Caco-2 (cell line): ENCODE measurements at regions of chr10 and their contacts with region 1.

Region 1: DNA sequence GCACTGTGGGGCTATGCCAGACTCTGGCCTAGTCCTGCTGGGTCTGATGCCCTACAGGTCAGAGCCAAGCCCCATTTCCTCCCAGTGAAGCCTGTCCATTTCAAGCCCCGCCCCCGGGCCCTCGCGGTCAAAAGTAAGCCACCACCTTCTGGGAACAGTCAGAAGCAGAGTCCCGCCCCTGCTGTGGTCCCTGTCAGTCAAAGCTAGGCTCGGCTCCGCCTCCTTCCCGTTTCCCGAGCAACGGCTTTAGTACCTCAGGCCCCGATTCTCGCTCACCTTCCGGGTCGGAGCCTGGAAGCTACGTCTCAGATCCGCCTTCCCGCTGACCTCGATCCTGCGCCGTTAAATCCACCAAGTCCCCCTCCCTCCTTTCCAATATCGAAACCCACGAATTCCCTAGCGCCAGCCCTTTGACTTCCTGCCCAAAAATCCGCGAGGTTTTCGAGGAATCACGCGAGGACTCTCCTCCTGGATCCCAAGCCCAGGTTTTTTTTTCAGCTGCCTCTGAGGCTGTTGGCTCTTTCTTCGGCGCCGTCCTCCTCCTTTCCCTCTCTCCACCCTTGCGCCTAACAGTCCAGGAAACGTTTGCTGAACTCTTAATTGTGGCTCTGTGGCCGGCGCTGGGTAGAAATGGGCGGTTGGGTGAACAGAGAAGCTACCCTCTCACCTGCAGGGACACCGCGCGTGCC is 11.8 kb downstream of the SFXN3 start:
- DNase-seq: peak; percentile 98
- H3K4me3 ChIP-seq: peak overlapping the region; percentile 40
- H3K4me3 Mint-ChIP-seq: peak overlapping the region; percentile 92
- H3K27ac Mint-ChIP-seq: peak overlapping the region; percentile 99
- H3K4me1 ChIP-seq: peaks cover 24% of the 10 kb centered on the region
- H3K4me1 Mint-ChIP-seq: peaks cover 14% of the 10 kb centered on the region
- H3K27me3 ChIP-seq: no peaks in the 10 kb centered on the region
- H3K27me3 Mint-ChIP-seq: no peaks in the 10 kb centered on the region
- CTCF ChIP-seq: no peak

Region 2: GRCh38 chr10:100998991-100999741 is 43.6 kb before region 1 on chr10:
- CTCF ChIA-PET with region 1: interaction called, 10 read pairs
- POLR2A ChIA-PET with region 1: no interaction called
- intact Hi-C with region 1: no loop called
- DNase-seq: peak; percentile 79 to 89
- H3K4me3 ChIP-seq: peak overlapping the region; percentile 94
- H3K4me3 Mint-ChIP-seq: peak overlapping the region; percentile 81
- H3K27ac Mint-ChIP-seq: peak overlapping the region; percentile 74
- H3K4me1 ChIP-seq: peaks cover 18% of the 10 kb centered on the region
- H3K4me1 Mint-ChIP-seq: peaks cover 14% of the 10 kb centered on the region
- H3K27me3 ChIP-seq: no peaks in the 10 kb centered on the region
- H3K27me3 Mint-ChIP-seq: no peaks in the 10 kb centered on the region
- CTCF ChIP-seq: peak; percentile 81 to 97

Region 3: GRCh38 chr10:101031128-101031795 is 11.5 kb before region 1 on chr10 and contains the starts of genes PDZD7 and SFXN3:
- CTCF ChIA-PET with region 1: interaction called, 43 read pairs
- POLR2A ChIA-PET with region 1: interaction called, 15 read pairs
- intact Hi-C with region 1: loop called (anchors 1 kb)
- DNase-seq: peak; percentile 97 to 99
- H3K4me3 ChIP-seq: peak within 1 kb of the TSS; percentile 76
- H3K4me3 Mint-ChIP-seq: peak within 1 kb of the TSS; percentile 80
- H3K27ac Mint-ChIP-seq: peak within 1 kb of the TSS; percentile 93
- H3K4me1 ChIP-seq: peaks cover 33% of the 10 kb centered on the region
- H3K4me1 Mint-ChIP-seq: peaks cover 17% of the 10 kb centered on the region
- H3K27me3 ChIP-seq: no peaks in the 10 kb centered on the region
- H3K27me3 Mint-ChIP-seq: no peaks in the 10 kb centered on the region
- CTCF ChIP-seq: no peak
- total RNA-seq, gene PDZD7: 1.4 and 1.5 TPM in 2 replicates
- total RNA-seq, gene SFXN3: 23.4 and 30.3 TPM in 2 replicates

Region 4: GRCh38 chr10:101067356-101068083 is 24.7 kb after region 1 on chr10:
- CTCF ChIA-PET with region 1: interaction called, 47 read pairs
- POLR2A ChIA-PET with region 1: interaction called, 24 read pairs
- intact Hi-C with region 1: loop called (anchors 1 kb)
- DNase-seq: peak; percentile 90
- H3K4me3 ChIP-seq: peak overlapping the region; percentile 70
- H3K4me3 Mint-ChIP-seq: peak overlapping the region; percentile 96
- H3K27ac Mint-ChIP-seq: peak overlapping the region; percentile 98
- H3K4me1 ChIP-seq: peaks cover 30% of the 10 kb centered on the region
- H3K4me1 Mint-ChIP-seq: peaks cover 22% of the 10 kb centered on the region
- H3K27me3 ChIP-seq: no peaks in the 10 kb centered on the region
- H3K27me3 Mint-ChIP-seq: no peaks in the 10 kb centered on the region
- CTCF ChIP-seq: peak; percentile 86 to 92

Region 5: DNA sequence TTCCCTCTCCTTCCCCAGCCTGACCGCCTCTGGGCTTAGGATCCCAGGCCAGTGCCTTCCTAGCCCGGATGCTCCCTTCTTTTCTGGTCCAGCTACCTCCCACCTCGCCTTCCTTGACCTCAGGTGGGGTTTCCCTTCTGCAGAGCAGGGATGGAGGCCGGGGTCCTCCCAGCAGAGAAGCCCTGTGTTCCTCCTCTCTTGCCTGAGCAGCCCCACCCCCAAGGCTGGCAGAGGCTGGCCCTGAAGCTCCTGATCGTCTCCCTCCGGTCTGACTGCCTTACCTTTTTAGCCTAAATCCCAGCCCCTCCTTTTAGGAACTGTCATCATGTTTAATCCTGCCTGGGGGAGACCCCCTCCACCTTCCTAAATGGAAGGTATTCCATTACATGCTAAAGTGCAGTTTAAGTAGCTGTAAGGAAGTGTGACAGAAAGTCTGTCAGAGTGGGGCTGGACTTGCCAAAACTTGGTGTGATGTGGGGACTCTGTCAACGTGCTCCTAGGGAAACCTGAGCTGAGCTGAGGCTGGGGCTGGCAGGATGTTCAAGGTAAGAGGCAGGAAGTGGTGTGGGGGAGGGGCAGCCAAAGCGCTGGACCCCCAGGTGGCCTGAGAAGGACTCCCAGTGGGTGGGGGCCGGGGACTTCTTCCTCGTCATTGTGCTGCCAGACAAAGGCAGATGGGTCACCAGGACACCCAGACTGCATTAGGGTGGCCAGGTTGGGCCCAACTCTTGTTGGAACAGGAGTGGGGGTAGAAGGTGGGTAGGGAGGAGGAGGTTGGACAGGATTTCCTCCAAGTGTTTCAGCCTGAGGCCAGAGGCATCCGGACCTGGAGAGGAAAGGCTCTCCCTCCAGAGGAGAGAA is 147.0 kb after region 1 on chr10:
- CTCF ChIA-PET with region 1: interaction called, 12 read pairs
- POLR2A ChIA-PET with region 1: no interaction called
- intact Hi-C with region 1: no loop called
- DNase-seq: no peak
- H3K4me3 ChIP-seq: no peak overlapping the region
- H3K4me3 Mint-ChIP-seq: no peak overlapping the region
- H3K27ac Mint-ChIP-seq: peak overlapping the region; percentile 19
- H3K4me1 ChIP-seq: 0 out of 2 replicates have a peak, but pooled peaks cover 8% of the 10 kb centered on the region
- H3K4me1 Mint-ChIP-seq: peaks cover 10% of the 10 kb centered on the region
- H3K27me3 ChIP-seq: no peaks in the 10 kb centered on the region
- H3K27me3 Mint-ChIP-seq: no peaks in the 10 kb centered on the region
- CTCF ChIP-seq: no peak